ENCODE measurements at regions of chr5 and their contacts with region 1.

Region 1: DNA sequence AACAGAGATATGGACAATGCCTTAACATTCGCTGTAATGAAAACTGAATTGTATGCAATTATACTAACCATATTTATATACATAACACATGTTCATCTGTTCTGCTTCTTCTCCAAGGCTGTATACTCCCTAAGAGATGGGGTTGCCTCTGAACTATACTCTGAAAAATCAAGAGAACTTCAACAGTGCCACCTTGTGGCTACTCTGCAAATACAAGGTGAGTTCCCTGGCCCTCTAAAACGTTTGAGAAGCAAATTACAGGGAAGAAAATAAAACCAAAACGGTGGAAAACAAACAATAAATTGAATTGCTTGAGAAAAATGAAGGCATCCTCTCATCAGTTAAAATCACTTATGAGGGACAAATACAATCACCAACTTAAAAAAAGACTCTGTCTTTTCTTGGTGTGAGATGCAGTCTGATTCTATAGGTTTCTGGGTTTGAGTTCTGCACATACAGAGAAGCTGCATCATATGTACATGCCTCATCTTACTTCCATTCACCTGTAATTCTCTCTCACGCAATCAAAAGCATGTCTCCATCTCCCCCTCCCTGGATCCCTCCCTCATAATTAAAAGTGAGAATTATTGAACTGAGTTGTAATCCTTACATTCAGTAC is 98.6 kb downstream of the FBXW11 start:
- DNase-seq: peak; percentile 70
- H3K4me3 Mint-ChIP-seq: no peak overlapping the region
- H3K27ac Mint-ChIP-seq: no peak overlapping the region
- H3K4me1 Mint-ChIP-seq: peaks cover 13% of the 10 kb centered on the region
- H3K27me3 Mint-ChIP-seq: no peaks in the 10 kb centered on the region
- CTCF ChIP-seq: peak; percentile 80

Region 2: GRCh38 chr5:171484460-171484899 is 423.4 kb before region 1 on chr5:
- CTCF ChIA-PET with region 1: no interaction called
- intact Hi-C with region 1: loop called (anchors 2 kb)
- DNase-seq: peak; percentile 57
- H3K4me3 Mint-ChIP-seq: no peak overlapping the region
- H3K27ac Mint-ChIP-seq: no peak overlapping the region
- H3K4me1 Mint-ChIP-seq: no peaks in the 10 kb centered on the region
- H3K27me3 Mint-ChIP-seq: peaks cover 88% of the 10 kb centered on the region
- CTCF ChIP-seq: peak; percentile 93

Region 3: DNA sequence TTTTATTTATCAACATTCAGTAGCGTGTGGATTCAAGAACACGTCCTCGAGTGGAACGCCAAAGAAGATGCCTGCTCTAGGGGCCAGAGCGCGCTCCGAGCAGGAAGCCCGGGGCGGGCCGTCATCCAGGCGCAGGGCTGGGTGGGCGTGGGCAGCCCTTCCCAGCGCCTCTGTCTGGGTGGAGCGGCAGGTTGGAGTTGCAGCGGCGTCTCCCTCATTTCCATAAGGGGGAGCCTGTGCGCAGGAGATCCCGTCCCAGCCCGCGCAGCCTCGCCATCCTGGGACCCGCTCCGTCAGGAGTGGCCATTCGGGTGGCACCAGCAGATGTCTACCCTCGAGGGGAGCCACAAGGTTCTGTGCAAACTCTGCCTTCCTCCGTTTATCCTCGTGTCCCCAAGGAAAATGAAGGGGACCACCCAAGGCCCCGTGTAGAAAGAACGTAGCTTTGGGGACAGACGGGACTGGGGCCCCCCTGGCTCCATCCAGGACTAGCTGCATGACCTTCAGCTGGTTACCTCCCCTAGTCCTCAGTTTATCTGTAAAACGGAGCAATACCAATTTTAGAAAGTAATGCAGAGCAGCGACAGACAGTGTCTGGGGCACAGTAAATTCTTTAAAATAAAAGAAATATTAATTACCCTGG is 277.7 kb before region 1 on chr5:
- CTCF ChIA-PET with region 1: interaction called, 4 read pairs
- intact Hi-C with region 1: loop called (anchors 2 kb)
- DNase-seq: peak; percentile 80
- H3K4me3 Mint-ChIP-seq: peak overlapping the region; percentile 59
- H3K27ac Mint-ChIP-seq: no peak overlapping the region
- H3K4me1 Mint-ChIP-seq: peaks cover 23% of the 10 kb centered on the region
- H3K27me3 Mint-ChIP-seq: peaks cover 52% of the 10 kb centered on the region
- CTCF ChIP-seq: no peak

Region 4: GRCh38 chr5:172035039-172035438 is 127.2 kb after region 1 on chr5:
- CTCF ChIA-PET with region 1: interaction called, 12 read pairs
- intact Hi-C with region 1: loop called (anchors 1 kb)
- DNase-seq: no peak
- H3K4me3 Mint-ChIP-seq: no peak overlapping the region
- H3K27ac Mint-ChIP-seq: no peak overlapping the region
- H3K4me1 Mint-ChIP-seq: peaks cover 4% of the 10 kb centered on the region
- H3K27me3 Mint-ChIP-seq: peaks cover 16% of the 10 kb centered on the region
- CTCF ChIP-seq: no peak

Measured in Calu3 (cell line).